RWPE1 (cell line): ENCODE measurements at regions of chr17 and their contacts with region 1.

Region 1: DNA sequence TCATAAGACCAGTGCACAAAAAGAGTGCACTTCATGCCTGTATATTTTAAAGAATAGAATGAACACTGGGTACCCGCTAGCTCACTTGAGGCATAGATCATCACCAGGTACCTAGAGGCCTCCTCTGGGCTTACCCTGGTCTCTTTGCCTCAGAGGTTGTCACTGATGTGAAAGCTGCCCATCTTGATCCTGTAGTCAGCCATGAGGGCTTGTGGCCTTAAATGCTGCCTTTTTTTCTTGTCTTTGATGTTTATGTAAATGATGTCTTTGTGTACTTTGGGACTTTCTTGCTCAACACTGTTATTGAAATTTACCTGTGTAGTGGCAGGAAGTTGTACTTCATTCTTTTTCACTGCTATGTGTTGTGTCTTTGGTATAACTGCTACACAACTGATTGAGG is 26.8 kb upstream of the SLC5A10 start:
- DNase-seq: no peak
- H3K27ac ChIP-seq: no peak overlapping the region
- CTCF ChIP-seq: no peak

Region 2: DNA sequence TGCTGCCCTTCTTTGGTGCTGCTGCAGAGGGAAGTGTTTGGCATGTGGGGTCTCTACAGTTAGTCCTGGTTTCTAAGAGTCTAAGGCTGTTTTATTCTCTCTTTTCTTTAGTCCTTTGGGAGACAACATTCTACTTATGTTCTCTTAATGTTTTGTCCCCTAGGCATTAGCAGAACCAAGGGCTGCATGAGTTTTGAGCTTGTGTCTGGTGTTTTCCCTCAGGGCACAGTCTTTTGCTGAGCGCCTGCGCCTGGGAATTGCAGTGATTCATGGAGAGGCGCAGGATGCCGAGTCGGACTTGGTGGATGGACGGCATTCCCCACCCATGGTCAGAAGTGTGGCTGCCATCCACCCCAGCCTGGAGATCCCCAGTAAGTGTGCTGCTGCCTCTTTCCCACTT is 14.3 kb before region 1 on chr17:
- CTCF ChIA-PET with region 1: no interaction called
- POLR2A ChIA-PET with region 1: interaction called, 11 read pairs
- DNase-seq: no peak
- H3K27ac ChIP-seq: no peak overlapping the region
- CTCF ChIP-seq: no peak

Region 3: GRCh38 chr17:18981642-18982424 is 56.6 kb after region 1 on chr17:
- CTCF ChIA-PET with region 1: no interaction called
- POLR2A ChIA-PET with region 1: no interaction called
- DNase-seq: no peak
- H3K27ac ChIP-seq: peak overlapping the region; percentile 78
- CTCF ChIP-seq: no peak